ENCODE measurements at regions of chr14 and their contacts with region 1.

Region 1: DNA sequence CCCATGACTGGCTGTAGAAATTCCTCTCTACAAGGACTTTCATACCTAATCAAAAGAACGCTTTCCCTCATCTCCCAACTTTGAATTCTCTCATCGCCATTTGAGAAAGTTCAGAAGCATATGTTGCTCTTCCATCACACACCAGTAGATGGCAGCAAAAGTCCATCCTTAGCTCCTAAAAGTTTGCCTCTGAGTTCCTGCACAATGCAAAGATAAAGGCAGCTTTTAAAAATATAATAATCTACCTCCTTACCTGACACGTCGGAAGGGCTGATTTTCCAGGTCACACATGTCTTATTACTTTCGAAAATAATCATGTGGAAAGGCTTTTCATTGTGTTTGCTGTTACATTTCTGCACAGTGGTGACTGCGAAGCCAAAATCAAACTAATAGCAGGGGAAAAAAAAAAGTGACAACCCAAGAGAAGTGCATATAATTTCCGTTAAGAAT is 456.7 kb upstream of the SEL1L start:
- DNase-seq: peak; percentile 32
- H3K4me3 ChIP-seq: no peak overlapping the region
- H3K27ac ChIP-seq: no peak overlapping the region
- H3K4me1 ChIP-seq: no peaks in the 10 kb centered on the region
- H3K27me3 ChIP-seq: no peaks in the 10 kb centered on the region
- CTCF ChIP-seq: peak; percentile 77 to 93

Region 2: GRCh38 chr14:81625343-81625742 is 365.0 kb before region 1 on chr14:
- CTCF ChIA-PET with region 1: no interaction called
- dilution Hi-C with region 1: no loop called
- in situ Hi-C with region 1: no loop called
- intact Hi-C with region 1: loop called (anchors 5 kb)
- DNase-seq: peak; percentile 4
- H3K4me3 ChIP-seq: no peak overlapping the region
- H3K27ac ChIP-seq: no peak overlapping the region
- H3K4me1 ChIP-seq: no peaks in the 10 kb centered on the region
- H3K27me3 ChIP-seq: no peaks in the 10 kb centered on the region
- CTCF ChIP-seq: peak; percentile 16 to 52

Region 3: DNA sequence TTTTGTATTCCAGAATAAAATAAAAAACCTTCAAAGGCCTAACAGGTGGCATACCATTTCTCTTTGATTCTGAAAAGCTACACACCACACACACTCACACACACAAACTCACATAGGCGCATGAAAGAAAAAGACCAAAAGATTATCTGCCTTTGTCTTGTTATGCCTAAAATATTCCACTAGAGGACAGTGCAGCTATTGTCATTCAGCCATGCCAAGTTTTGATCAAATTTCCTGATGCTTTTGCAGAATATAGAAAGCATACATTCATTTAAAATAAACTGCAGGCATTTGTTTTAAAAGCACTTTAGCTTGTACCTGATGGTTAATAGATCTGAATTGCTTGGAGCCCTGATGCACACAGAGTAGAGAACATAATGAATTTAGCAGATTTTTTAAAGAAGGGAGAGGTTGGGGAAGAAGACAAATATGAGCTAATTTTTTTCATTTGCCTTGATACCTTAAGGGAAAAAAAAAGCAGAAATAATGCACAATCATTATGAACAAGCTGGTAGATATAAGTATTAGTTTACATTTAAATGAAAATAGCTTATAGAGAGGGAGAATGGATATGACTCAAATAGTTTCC is 1310.2 kb after region 1 on chr14:
- CTCF ChIA-PET with region 1: no interaction called
- dilution Hi-C with region 1: no loop called
- in situ Hi-C with region 1: no loop called
- intact Hi-C with region 1: loop called (anchors 5 kb)
- DNase-seq: peak; percentile 21
- H3K4me3 ChIP-seq: no peak overlapping the region
- H3K27ac ChIP-seq: no peak overlapping the region
- H3K4me1 ChIP-seq: no peaks in the 10 kb centered on the region
- H3K27me3 ChIP-seq: no peaks in the 10 kb centered on the region
- CTCF ChIP-seq: peak; percentile 93 to 98

Measured in mammary epithelial cell (primary cell).